ENCODE measurements at regions of chr6 and their contacts with region 1.

Region 1: GRCh38 chr6:156857573-156857972 is 80.4 kb downstream of the ARID1B start:
- DNase-seq: peak; percentile 58
- ATAC-seq: peak; percentile 94
- H3K4me3 Mint-ChIP-seq: peak overlapping the region; percentile 4
- H3K27ac Mint-ChIP-seq: peak overlapping the region; percentile 93
- H3K4me1 Mint-ChIP-seq: peaks cover 85% of the 10 kb centered on the region
- H3K27me3 Mint-ChIP-seq: no peaks in the 10 kb centered on the region

Region 2: GRCh38 chr6:156174031-156174890 is 683.3 kb before region 1 on chr6:
- CTCF ChIA-PET with region 1: no interaction called
- POLR2A ChIA-PET with region 1: no interaction called
- intact Hi-C with region 1: loop called in 1 of 2 experiments (anchors 1 kb)
- DNase-seq: peak; percentile 73
- ATAC-seq: peak; percentile 95
- H3K4me3 Mint-ChIP-seq: peak overlapping the region; percentile 9
- H3K27ac Mint-ChIP-seq: peak overlapping the region; percentile 88
- H3K4me1 Mint-ChIP-seq: peaks cover 27% of the 10 kb centered on the region
- H3K27me3 Mint-ChIP-seq: no peaks in the 10 kb centered on the region

Region 3: DNA sequence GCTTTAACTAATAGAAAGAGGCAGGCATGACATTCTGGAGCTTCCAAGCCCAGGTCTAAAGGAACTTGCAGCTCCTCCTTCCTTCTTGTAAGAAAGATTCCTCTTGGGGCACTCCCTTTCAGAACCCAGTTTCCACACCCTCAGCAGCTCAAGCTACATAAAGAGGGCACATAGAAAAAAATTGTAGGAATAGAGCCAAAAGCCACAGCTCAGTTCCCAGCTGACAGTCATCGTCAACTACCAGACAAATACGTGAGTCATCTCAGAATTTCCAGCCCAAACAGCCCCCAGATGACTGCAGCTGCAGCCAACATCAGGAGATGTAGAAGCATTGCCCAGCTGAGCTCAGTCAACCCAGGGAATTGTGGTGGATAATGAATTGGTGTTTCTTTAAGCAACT is 430.2 kb before region 1 on chr6:
- CTCF ChIA-PET with region 1: no interaction called
- POLR2A ChIA-PET with region 1: no interaction called
- intact Hi-C with region 1: no loop called
- DNase-seq: peak; percentile 20
- ATAC-seq: no peak
- H3K4me3 Mint-ChIP-seq: no peak overlapping the region
- H3K27ac Mint-ChIP-seq: no peak overlapping the region
- H3K4me1 Mint-ChIP-seq: peaks cover 24% of the 10 kb centered on the region
- H3K27me3 Mint-ChIP-seq: no peaks in the 10 kb centered on the region

Region 4: GRCh38 chr6:156686995-156687788 is 170.4 kb before region 1 on chr6:
- CTCF ChIA-PET with region 1: no interaction called
- POLR2A ChIA-PET with region 1: no interaction called
- intact Hi-C with region 1: loop called in 1 of 2 experiments (anchors 1 kb)
- DNase-seq: peak; percentile 81
- ATAC-seq: peak; percentile 88
- H3K4me3 Mint-ChIP-seq: peak overlapping the region; percentile 80
- H3K27ac Mint-ChIP-seq: peak overlapping the region; percentile 95
- H3K4me1 Mint-ChIP-seq: peaks cover 39% of the 10 kb centered on the region
- H3K27me3 Mint-ChIP-seq: peaks cover 2% of the 10 kb centered on the region

Region 5: DNA sequence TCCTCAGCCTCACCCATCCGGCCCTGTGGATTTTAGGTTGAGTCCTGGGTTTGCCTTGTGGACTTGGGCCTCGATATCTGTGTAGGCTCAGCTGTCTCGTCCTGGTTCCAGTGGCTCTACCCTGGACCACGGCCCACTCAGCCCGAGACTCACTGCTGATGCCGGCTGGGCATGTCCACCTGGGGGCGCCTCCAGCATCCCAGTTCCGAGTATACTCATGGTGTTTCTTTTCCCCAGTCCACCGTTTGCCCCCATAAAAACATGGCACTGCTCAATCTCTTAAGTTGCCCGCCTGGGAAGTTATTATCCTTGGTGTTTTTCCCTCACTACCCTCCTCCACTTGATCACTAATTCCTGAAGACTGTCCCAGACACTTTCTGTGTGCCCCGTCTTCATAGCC is 18.7 kb after region 1 on chr6:
- CTCF ChIA-PET with region 1: no interaction called
- POLR2A ChIA-PET with region 1: no interaction called
- intact Hi-C with region 1: no loop called
- DNase-seq: peak; percentile 37
- ATAC-seq: no peak
- H3K4me3 Mint-ChIP-seq: no peak overlapping the region
- H3K27ac Mint-ChIP-seq: no peak overlapping the region
- H3K4me1 Mint-ChIP-seq: peaks cover 70% of the 10 kb centered on the region
- H3K27me3 Mint-ChIP-seq: no peaks in the 10 kb centered on the region

Region 6: DNA sequence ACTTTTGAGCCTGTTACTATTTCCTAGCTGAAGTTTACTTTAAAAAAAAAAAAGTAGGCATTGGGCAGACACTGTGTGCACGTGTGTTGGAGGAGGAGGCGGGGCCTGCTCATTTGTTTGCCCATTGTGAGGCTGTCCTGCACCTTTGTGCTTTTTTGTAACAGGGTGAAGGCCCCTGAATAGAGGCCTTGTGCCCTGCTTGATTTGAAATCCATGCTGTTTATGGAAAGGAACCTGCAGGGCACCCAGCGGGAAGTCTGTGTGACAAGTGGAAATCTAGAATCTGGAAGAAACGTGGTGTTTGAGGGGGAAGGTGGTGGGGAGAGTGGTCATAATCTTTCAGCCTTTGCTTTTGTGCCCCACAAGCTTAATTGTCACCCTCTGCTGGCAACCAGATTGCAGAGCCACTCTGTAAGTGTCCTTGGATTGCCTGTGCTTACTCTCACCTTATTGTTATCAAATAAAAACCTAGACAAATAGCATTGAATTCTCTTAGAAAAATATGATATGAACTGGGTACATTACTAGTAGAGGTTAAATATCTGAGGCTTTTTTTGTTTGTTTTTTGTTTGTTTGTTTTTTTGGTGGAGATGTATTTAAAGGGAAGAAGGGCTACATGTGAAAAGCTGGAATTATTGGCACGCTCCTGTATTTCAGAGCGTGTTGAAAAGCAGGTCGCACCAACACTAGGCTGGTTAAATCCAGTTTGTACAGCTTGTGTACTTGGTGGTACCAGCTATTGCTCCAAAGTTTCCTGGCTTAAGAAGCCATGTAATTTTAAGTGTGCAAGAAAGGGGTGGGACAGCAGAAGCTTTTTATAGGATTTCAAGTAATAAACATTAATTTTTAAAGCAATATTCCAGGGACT is 75.9 kb after region 1 on chr6:
- CTCF ChIA-PET with region 1: no interaction called
- POLR2A ChIA-PET with region 1: interaction called, 3 read pairs
- intact Hi-C with region 1: loop called (anchors 1 to 2 kb)
- DNase-seq: no peak
- ATAC-seq: no peak
- H3K4me3 Mint-ChIP-seq: no peak overlapping the region
- H3K27ac Mint-ChIP-seq: peak overlapping the region; percentile 2
- H3K4me1 Mint-ChIP-seq: peaks cover 77% of the 10 kb centered on the region
- H3K27me3 Mint-ChIP-seq: no peaks in the 10 kb centered on the region

Region 7: DNA sequence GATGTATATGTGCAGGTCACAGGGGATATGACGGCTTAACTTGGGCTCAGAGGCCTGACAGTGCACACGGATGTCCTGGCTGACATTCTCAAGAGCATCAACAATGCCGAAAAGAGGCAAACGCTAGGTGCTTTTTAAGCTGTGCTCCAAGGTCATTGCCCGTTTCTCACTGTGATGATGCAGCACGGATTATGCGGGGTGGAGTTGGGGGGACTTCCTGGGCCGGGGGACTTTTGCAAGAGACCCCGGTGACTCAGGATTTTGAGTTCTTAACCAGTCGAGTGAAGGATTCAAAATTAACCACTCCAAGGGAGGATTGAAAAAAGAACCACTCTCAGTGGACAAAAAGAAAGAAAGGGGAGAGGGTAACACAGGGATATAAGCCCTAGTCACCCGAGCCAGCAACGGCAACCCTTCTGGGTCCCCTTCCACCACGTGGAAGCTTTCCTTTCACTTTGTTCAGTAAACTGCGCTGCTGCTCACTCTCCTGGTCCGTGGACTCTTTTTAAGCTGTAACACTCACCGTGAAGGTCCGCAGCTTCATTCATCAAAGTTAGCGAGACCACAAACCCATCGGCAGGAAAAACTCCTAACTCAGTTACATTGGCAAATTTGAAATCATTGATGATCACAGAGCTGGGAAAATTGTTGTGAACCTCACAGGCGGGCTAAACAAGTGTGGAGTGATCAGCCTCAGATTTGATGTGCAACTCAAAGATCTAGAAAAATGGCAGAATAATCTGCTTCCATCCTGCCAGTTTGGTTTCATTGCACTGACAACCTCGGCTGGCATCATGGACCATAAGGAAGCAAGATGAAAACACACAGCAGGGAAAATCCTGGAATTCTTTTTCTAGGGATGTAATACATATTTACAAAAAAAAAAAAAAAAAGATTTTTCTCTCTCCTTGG is 118.9 kb after region 1 on chr6:
- CTCF ChIA-PET with region 1: no interaction called
- POLR2A ChIA-PET with region 1: no interaction called
- intact Hi-C with region 1: loop called in 1 of 2 experiments (anchors 5 kb)
- DNase-seq: peak; percentile 25
- ATAC-seq: peak; percentile 25
- H3K4me3 Mint-ChIP-seq: peak overlapping the region; percentile 58
- H3K27ac Mint-ChIP-seq: peak overlapping the region; percentile 47
- H3K4me1 Mint-ChIP-seq: peaks cover 86% of the 10 kb centered on the region
- H3K27me3 Mint-ChIP-seq: no peaks in the 10 kb centered on the region